ENCODE measurements at regions of chr10 and their contacts with region 1.

Region 1: GRCh38 chr10:110137142-110137545 is 70.3 kb upstream of the MXI1 start:
- DNase-seq: peak; percentile 76
- ATAC-seq: peak; percentile 77
- H3K4me3 ChIP-seq: no peak overlapping the region
- H3K27ac ChIP-seq: no peak overlapping the region
- H3K4me1 ChIP-seq: peaks cover 18% of the 10 kb centered on the region
- H3K27me3 ChIP-seq: no peaks in the 10 kb centered on the region
- CTCF ChIP-seq: peak; percentile 84
- EP300 ChIP-seq: no peak
- POLR2A ChIP-seq: no peak
- RAD21 ChIP-seq: peak; percentile 72

Region 2: GRCh38 chr10:109883859-109884771 is 253.0 kb before region 1 on chr10:
- CTCF ChIA-PET with region 1: interaction called, 8 read pairs
- POLR2A ChIA-PET with region 1: no interaction called
- in situ Hi-C with region 1: loop called (anchors 10 kb)
- intact Hi-C with region 1: loop called (anchors 1 kb)
- DNase-seq: peak; percentile 81
- ATAC-seq: peak; percentile 93
- H3K4me3 ChIP-seq: no peak overlapping the region
- H3K27ac ChIP-seq: no peak overlapping the region
- H3K4me1 ChIP-seq: peaks cover 7% of the 10 kb centered on the region; the same call in 1 of the 2 replicates
- H3K27me3 ChIP-seq: no peaks in the 10 kb centered on the region
- CTCF ChIP-seq: peak; percentile 93
- EP300 ChIP-seq: no peak
- POLR2A ChIP-seq: no peak
- RAD21 ChIP-seq: peak; percentile 95

Region 3: GRCh38 chr10:110059925-110060324 is 77.2 kb before region 1 on chr10:
- CTCF ChIA-PET with region 1: no interaction called
- POLR2A ChIA-PET with region 1: no interaction called
- in situ Hi-C with region 1: no loop called
- intact Hi-C with region 1: no loop called
- DNase-seq: no peak
- ATAC-seq: no peak
- H3K4me3 ChIP-seq: no peak overlapping the region
- H3K27ac ChIP-seq: no peak overlapping the region
- H3K4me1 ChIP-seq: no peaks in the 10 kb centered on the region
- H3K27me3 ChIP-seq: no peaks in the 10 kb centered on the region
- CTCF ChIP-seq: no peak
- EP300 ChIP-seq: no peak
- POLR2A ChIP-seq: no peak
- RAD21 ChIP-seq: no peak

Region 4: DNA sequence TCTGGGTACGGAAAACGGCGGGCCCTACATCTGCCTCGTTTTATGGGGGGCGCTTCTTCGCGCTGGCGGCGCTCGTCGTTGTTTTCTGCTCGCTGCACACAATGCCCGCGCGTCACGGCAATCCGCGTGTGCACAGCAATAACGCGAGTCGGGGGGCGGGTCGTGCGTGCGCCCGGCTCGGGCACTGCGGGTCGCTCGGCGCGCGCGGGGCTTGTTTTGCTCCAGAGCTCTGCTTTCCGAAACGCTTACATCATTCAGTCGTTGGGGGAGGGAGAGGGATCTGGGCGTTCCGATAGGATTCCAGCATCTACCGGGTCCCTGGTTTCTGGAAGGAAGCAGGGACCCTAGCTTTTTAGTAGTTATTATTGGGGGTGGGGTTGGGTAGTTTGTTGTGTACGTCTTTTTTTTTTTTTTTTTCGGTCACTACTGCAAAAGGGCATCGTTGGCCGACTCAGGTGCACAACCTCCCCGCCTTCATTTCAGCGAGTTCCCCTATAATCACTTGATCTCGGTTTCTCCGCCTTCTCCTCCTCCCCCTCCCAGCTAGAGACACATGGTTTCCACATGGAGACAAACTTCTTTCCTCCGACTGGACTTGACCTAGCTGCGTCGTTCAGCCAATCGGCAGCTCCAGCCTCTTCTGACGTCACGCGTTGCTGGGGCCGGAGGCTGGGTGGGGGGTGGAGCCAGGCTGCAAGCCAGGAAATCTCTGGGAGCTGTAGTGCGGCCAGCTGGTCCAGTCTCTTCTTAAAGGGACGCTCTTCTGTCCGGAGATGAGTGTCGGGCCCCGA is 73.7 kb after region 1 on chr10:
- CTCF ChIA-PET with region 1: no interaction called
- POLR2A ChIA-PET with region 1: no interaction called
- in situ Hi-C with region 1: no loop called
- intact Hi-C with region 1: loop called (anchors 5 kb)
- DNase-seq: peak; percentile 95
- ATAC-seq: peak; percentile 77
- H3K4me3 ChIP-seq: peak overlapping the region; percentile 69 to 90 (median 72)
- H3K27ac ChIP-seq: peak overlapping the region; percentile 70
- H3K4me1 ChIP-seq: peaks cover 54% of the 10 kb centered on the region
- H3K27me3 ChIP-seq: peaks cover 0 to 4% of the 10 kb centered on the region in 2 experiments; a peak in 1 of 5 replicates
- CTCF ChIP-seq: peak; percentile 13; the same call in 1 of the 2 replicates
- EP300 ChIP-seq: peak in 1 of 2 experiments; percentile 37; a peak in 1 of 4 replicates
- POLR2A ChIP-seq: peak in 1 of 2 experiments; percentile 52; a peak in 2 of 4 replicates
- RAD21 ChIP-seq: no peak

Region 5: DNA sequence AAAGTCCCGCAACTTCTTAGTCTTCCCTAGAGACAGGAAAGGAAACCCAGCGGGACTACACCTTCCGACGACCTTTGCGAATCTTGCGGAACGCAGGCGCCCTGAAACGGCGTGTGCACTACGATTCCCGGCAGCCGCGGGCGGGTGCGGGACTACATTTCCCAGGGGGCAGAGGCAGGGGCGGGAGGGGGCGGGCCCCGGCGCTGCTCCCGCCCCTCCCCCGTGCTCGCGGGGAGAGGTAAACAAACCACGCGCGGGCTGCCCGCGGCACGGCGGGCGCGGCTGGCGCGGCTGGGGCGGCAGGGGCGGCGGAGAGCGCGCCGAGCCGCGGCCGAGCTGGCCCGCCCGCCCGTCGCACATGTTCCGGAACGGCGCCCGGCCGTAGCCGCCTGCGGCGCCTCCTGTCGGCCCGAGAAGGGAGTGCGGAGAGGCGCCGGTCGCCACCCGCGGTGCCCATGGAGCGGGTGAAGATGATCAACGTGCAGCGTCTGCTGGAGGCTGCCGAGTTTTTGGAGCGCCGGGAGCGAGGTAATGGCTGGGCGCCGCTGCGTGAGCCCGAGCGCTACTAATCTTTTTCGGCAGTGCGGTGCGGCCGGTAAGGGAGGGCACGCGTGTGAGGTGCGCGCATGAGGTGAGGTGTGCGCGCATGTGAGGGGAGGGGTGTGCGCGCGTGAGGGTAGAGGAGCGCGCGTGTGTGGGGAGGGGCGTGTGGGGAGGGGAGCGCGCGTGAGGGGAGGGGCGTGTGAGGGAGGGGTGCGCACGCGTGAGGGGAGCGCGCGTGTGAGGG is 88.8 kb after region 1 on chr10:
- CTCF ChIA-PET with region 1: interaction called, 7 read pairs
- POLR2A ChIA-PET with region 1: no interaction called
- in situ Hi-C with region 1: loop called (anchors 5 kb)
- intact Hi-C with region 1: loop called (anchors 1 kb)
- DNase-seq: peak; percentile 83
- ATAC-seq: peak; percentile 87
- H3K4me3 ChIP-seq: peak overlapping the region; percentile 76 to 82 (median 77)
- H3K27ac ChIP-seq: peak overlapping the region; percentile 84
- H3K4me1 ChIP-seq: peaks cover 22% of the 10 kb centered on the region
- H3K27me3 ChIP-seq: no peaks in the 10 kb centered on the region
- CTCF ChIP-seq: peak; percentile 70
- EP300 ChIP-seq: no peak
- POLR2A ChIP-seq: peak in 1 of 2 experiments; percentile 52; a peak in 1 of 4 replicates
- RAD21 ChIP-seq: peak; percentile 74

Region 6: DNA sequence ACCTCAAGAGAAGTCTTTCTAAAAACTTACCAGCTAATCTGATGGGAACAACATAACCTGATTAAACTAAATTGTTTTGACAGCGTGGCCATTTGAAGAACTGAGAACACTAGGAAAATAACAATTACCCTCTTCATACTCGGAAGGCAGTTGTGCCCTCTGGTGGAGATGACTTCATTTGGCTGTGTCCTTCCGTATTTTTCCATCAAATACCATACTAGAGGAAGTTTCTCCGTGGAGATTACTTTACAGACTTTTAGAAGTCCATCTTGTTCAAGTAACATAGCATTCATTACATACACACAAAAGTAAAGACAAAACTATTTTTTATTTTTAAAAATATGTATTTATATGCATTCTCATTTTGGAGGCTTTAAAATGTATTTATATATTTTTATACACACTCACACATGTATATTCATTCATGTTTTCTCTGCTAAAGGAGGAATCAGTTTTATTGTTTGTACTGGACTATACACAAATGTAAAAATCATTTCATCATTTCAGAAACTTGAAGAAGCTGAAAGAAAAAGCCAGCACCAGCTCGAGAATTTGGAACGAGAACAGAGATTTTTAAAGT is 142.4 kb after region 1 on chr10:
- CTCF ChIA-PET with region 1: interaction called, 73 read pairs
- POLR2A ChIA-PET with region 1: no interaction called
- in situ Hi-C with region 1: loop called (anchors 5 kb)
- intact Hi-C with region 1: loop called (anchors 1 kb)
- DNase-seq: peak; percentile 65
- ATAC-seq: peak; percentile 71
- H3K4me3 ChIP-seq: no peak overlapping the region
- H3K27ac ChIP-seq: no peak overlapping the region
- H3K4me1 ChIP-seq: peaks cover 9% of the 10 kb centered on the region
- H3K27me3 ChIP-seq: no peaks in the 10 kb centered on the region; a peak in 1 of 5 replicates
- CTCF ChIP-seq: peak; percentile 78
- EP300 ChIP-seq: no peak
- POLR2A ChIP-seq: no peak
- RAD21 ChIP-seq: peak; percentile 68; the same call in 1 of the 2 replicates

Region 7: GRCh38 chr10:110600487-110601101 is 463.4 kb after region 1 on chr10:
- CTCF ChIA-PET with region 1: no interaction called
- POLR2A ChIA-PET with region 1: no interaction called
- in situ Hi-C with region 1: no loop called
- intact Hi-C with region 1: loop called (anchors 10 kb)
- DNase-seq: peak; percentile 62
- ATAC-seq: peak; percentile 75
- H3K4me3 ChIP-seq: no peak overlapping the region
- H3K27ac ChIP-seq: no peak overlapping the region
- H3K4me1 ChIP-seq: no peaks in the 10 kb centered on the region
- H3K27me3 ChIP-seq: no peaks in the 10 kb centered on the region
- CTCF ChIP-seq: peak; percentile 54
- EP300 ChIP-seq: no peak
- POLR2A ChIP-seq: no peak
- RAD21 ChIP-seq: no peak